T-cell (primary cell): ENCODE measurements at regions of chr16 and their contacts with region 1.

Region 1: GRCh38 chr16:30185683-30186465 is 2.5 kb downstream of the CORO1A start:
- DNase-seq: peak; percentile 74 to 92 (median 83)
- ATAC-seq: peak; percentile 50 to 58 (median 53)
- H3K4me3 ChIP-seq: peak overlapping the region; percentile 76 to 98
- H3K4me3 Mint-ChIP-seq: peak overlapping the region; percentile 94 to 98 (median 97)
- H3K27ac ChIP-seq: peak overlapping the region; percentile 76
- H3K27ac Mint-ChIP-seq: peak overlapping the region; percentile 93 to 99
- H3K4me1 ChIP-seq: peaks cover 24 to 51% of the 10 kb centered on the region in 2 experiments
- H3K4me1 Mint-ChIP-seq: peaks cover 31 to 37% (median 35%) of the 10 kb centered on the region in 3 donors
- H3K27me3 ChIP-seq: no peaks in the 10 kb centered on the region
- H3K27me3 Mint-ChIP-seq: no peaks in the 10 kb centered on the region

Region 2: DNA sequence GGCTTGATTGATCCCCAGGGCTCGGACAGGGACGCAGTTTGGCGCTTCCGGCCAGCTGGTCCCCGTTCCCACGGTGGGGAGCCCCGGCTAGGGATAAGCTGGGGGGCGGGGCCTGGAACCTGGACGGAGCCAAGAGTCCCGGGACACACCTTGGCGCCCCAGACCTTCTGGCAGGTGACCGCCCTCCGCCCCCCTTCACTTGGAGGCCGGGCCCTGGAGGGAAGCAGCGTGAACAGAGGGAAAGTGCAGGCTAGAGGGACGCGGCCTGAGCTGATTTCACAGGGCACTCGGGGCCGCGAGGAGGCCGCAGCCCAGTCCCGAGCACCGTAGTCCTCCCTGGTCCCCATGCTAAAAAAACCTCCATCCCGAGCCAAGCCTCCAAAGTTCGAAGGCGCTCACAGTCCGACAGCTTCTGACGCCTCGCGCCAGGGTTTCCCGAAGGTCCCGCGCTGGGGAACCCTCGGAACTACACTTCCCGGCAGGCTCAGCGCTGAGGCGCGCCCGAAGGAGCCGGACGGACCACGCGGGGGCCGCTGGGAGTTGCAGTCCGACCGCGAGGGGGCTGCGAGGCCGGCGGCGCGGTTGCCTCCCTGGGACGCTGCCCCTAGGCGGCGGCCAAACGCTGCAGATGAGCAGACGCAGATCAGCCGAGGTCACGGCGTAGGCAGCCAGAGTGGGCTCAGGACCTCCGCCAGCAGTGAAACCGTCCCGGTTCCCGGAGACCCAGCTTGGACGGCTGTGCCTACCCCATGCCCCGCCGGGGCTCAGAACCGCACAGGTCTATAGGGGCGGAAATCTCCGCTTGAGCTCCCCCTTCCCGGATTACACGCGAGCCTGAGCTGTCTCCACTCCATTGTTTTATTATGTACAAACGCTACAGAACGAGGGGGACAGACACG is 94.2 kb before region 1 on chr16 and contains the start of gene TBX6:
- CTCF ChIA-PET with region 1: interaction called in 1 of 2 experiments, 13 read pairs
- POLR2A ChIA-PET with region 1: interaction called in 1 of 2 experiments, 5 read pairs
- DNase-seq: peak; percentile 82 to 95 (median 90)
- ATAC-seq: peak; percentile 79 to 87 (median 82)
- H3K4me3 ChIP-seq: peak within 1 kb of the TSS; percentile 62
- H3K4me3 Mint-ChIP-seq: peak within 1 kb of the TSS; percentile 83 to 93 (median 84)
- H3K27ac ChIP-seq: peak within 1 kb of the TSS; percentile 74
- H3K27ac Mint-ChIP-seq: peak within 1 kb of the TSS; percentile 96
- H3K4me1 ChIP-seq: peaks cover 38 to 69% of the 10 kb centered on the region in 2 experiments
- H3K4me1 Mint-ChIP-seq: peaks cover 47 to 56% (median 52%) of the 10 kb centered on the region in 3 donors
- H3K27me3 ChIP-seq: no peaks in the 10 kb centered on the region
- H3K27me3 Mint-ChIP-seq: no peaks in the 10 kb centered on the region
- total RNA-seq, gene TBX6: 1.4 to 2.0 (median 1.5) TPM

Region 3: DNA sequence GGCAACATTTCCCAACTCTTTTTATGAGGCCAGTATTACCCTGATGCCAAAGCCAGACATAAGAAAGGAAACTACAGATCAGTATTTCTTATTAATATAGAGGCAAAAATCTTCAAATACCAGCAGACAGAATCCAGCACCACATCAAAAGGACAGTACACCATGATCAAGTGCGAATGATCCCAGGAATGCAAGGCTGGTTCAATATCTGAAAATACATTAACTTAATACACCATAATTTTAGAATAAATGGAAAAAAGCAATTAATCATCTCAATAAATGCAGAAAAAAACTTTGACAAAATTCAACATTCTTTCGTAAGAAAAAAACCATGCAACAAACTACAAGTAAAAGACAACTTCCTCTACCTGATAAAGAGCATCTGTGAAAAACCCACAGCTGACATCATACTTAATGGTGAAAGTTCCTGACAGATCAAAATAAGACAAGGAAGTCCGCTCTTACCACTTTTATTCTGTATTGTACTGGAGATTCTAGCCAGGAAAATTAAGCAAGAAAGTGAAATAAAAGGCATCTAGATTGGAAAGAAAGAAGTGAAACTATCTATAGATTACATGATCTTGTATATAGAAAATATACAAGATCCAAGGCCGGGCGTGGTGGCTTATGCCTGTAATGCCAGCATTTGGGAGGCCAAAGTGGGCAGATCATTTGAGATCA is 36.5 kb before region 1 on chr16:
- CTCF ChIA-PET with region 1: no interaction called
- POLR2A ChIA-PET with region 1: no interaction called
- DNase-seq: no peak
- ATAC-seq: no peak
- H3K4me3 ChIP-seq: no peak overlapping the region
- H3K4me3 Mint-ChIP-seq: no peak overlapping the region
- H3K27ac ChIP-seq: no peak overlapping the region
- H3K27ac Mint-ChIP-seq: no peak overlapping the region
- H3K4me1 ChIP-seq: no peaks in the 10 kb centered on the region
- H3K4me1 Mint-ChIP-seq: peaks cover 0 to 3% (median 0%) of the 10 kb centered on the region in 3 donors
- H3K27me3 ChIP-seq: no peaks in the 10 kb centered on the region
- H3K27me3 Mint-ChIP-seq: no peaks in the 10 kb centered on the region

Region 4: GRCh38 chr16:30767767-30768415 is 582.0 kb after region 1 on chr16:
- CTCF ChIA-PET with region 1: no interaction called
- POLR2A ChIA-PET with region 1: no interaction called
- DNase-seq: peak in 22 of 35 experiments; percentile 20 to 74 (median 42)
- ATAC-seq: peak in 2 of 4 experiments; percentile 68
- H3K4me3 ChIP-seq: no peak overlapping the region
- H3K4me3 Mint-ChIP-seq: no peak overlapping the region
- H3K27ac ChIP-seq: peak overlapping the region; percentile 35
- H3K27ac Mint-ChIP-seq: no peak overlapping the region
- H3K4me1 ChIP-seq: peaks cover 6 to 52% of the 10 kb centered on the region in 2 experiments
- H3K4me1 Mint-ChIP-seq: peaks cover 16 to 27% (median 22%) of the 10 kb centered on the region in 3 donors
- H3K27me3 ChIP-seq: no peaks in the 10 kb centered on the region
- H3K27me3 Mint-ChIP-seq: no peaks in the 10 kb centered on the region